ENCODE measurements at regions of chr7 and their contacts with region 1.

Region 1: DNA sequence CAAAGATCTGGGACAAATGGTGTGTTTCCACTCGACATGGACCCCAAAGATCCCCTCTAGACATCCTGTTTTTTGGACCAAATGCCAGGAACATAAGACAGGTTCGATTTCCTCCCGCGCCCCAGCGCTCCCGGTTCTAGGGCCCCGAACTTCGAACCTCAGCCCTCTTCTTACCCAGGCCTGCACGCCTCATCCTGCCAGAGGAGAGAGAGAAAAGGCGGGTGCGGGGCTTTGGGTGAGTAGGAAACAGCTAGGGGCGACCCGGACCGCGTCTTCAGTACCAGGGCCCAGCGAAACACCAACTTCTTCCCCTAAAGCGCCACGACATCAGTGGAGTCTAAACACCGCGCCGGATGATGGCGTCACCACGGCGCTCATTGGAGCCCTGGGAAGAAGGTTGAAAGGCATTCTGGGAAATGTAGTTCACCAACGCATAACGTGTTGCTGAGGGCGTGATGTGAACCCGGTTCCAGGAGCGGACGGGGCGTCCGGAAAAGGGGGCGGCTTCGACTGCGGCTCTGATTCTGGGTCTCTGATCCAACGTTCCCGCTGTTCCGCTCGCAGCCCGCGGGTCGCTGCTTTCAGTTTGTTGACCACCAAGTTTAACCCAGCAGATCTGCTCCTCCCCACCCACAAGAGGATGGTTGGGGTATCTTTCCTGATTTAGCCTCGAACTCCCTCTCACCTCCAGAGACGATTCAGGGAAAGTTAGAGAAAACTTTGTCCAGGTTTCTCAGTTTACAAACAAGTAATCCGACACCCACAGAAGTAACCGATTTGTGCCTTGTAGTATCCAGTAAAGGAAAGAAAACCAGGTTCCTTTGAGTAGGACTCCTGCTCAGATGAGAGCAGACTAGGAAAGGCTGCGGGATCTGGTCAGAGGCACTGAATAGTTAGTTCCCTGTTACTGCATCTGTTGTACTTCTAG is at the start of gene BET1:
- DNase-seq: peak; percentile 92 to 95
- ATAC-seq: peak; percentile 98 to 100 (median 100)
- H3K4me3 ChIP-seq: peak within 1 kb of the TSS; percentile 68 to 89 (median 76)
- H3K27ac ChIP-seq: peak within 1 kb of the TSS; percentile 18 to 96 (median 82)
- H3K4me1 ChIP-seq: peaks cover 0 to 31% (median 21%) of the 10 kb centered on the region in 9 donors
- H3K27me3 ChIP-seq: peaks cover 0 to 14% (median 0%) of the 10 kb centered on the region in 7 donors
- CTCF ChIP-seq: no peak
- total RNA-seq, gene BET1: 6.9 to 13.8 (median 11.0) TPM

Region 2: GRCh38 chr7:93902777-93903423 is 101.4 kb before region 1 on chr7:
- intact Hi-C with region 1: loop called in 3 of 10 experiments (anchors 5 to 10 kb)
- DNase-seq: peak in 1 of 2 donors; percentile 36
- ATAC-seq: peak in 7 of 8 donors; percentile 20 to 71 (median 66)
- H3K4me3 ChIP-seq: no peak overlapping the region
- H3K27ac ChIP-seq: no peak overlapping the region
- H3K4me1 ChIP-seq: peaks cover 0 to 8% (median 0%) of the 10 kb centered on the region in 9 donors
- H3K27me3 ChIP-seq: peaks cover 0 to 4% (median 0%) of the 10 kb centered on the region in 7 donors
- CTCF ChIP-seq: peak; percentile 65 to 91 (median 78)

Region 3: DNA sequence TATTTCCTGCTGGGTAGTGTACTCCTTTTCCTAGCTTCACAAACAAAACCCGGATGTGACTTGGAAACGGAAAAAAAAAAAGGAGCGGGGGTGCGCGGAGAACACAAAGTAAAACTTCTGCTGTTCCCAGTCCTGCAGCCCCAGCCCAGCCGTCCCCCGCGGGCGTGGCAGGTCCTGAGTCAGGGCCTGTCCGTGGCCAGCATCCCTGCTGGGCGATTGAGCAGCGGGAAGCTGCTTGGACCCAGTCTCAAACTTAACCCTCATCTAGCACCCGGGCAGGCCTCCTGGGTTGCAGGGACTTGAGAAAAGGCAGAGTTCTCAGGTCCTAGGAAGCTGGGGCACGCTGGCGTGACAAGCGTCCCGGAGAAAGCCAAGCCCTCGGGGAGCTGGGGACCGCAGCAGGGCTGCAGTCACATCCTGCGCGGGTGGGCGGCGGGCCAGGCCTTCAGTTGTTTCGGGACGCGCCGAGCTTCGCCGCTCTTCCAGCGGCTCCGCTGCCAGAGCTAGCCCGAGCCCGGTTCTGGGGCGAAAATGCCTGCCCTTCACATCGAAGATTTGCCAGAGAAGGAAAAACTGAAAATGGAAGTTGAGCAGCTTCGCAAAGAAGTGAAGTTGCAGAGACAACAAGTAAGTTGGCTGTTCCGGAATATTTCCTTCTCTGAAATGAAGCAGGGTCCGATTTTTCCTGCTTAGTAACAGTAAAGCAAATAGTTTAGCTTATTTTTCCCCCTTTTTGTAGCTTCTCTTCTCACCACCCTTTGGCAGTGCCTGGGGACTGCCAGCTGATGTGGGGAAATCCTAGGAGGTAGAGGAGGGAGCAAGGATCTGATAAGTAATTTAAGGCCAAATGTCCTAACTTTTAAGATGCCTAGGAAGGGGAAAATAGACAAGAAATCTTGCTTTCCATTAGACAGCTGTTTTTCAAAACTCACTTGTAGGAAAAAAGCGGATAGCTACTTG is 82.4 kb before region 1 on chr7 and contains the start of gene GNG11:
- intact Hi-C with region 1: loop called in 5 of 10 experiments (anchors 5 kb)
- DNase-seq: peak; percentile 87 to 90
- ATAC-seq: peak; percentile 91 to 98 (median 97)
- H3K4me3 ChIP-seq: peak within 1 kb of the TSS; percentile 34 to 80 (median 62)
- H3K27ac ChIP-seq: peak within 1 kb of the TSS; percentile 84 to 98 (median 90)
- H3K4me1 ChIP-seq: peaks cover 0 to 44% (median 16%) of the 10 kb centered on the region in 9 donors
- H3K27me3 ChIP-seq: peaks cover 0 to 30% (median 0%) of the 10 kb centered on the region in 7 donors
- CTCF ChIP-seq: peak in 2 of 9 donors; percentile 11 to 27
- total RNA-seq, gene GNG11: 10.6 to 24.7 (median 14.6) TPM

Region 4: DNA sequence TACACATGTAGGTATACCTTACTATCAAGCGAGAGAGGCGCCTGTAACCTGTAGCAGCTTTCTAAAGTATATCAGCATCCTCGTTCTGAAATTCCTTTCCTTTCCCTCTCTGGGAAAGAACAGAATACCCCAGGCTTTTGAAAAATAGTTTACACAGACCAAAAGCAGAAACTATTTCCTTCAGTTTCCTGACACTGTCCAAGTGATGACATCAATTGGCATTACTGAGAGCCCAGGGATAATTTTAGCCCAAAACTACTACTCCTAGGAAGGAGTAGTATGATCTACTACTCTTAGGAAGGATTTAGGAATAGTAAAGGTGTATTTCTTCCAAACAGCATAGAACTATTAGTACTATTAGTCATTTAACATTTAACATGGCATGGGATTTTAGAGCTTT is 76.7 kb before region 1 on chr7:
- intact Hi-C with region 1: loop called in 5 of 10 experiments (anchors 5 kb)
- DNase-seq: no peak
- ATAC-seq: peak in 6 of 8 donors; percentile 56 to 82 (median 75)
- H3K4me3 ChIP-seq: peak overlapping the region in 1 of 10 donors; percentile 9
- H3K27ac ChIP-seq: peak overlapping the region in 8 of 10 donors; percentile 38 to 96 (median 50)
- H3K4me1 ChIP-seq: peaks cover 0 to 51% (median 20%) of the 10 kb centered on the region in 9 donors
- H3K27me3 ChIP-seq: peaks cover 0 to 7% (median 0%) of the 10 kb centered on the region in 7 donors
- CTCF ChIP-seq: no peak

Region 5: GRCh38 chr7:94059746-94060145 is 55.5 kb after region 1 on chr7:
- intact Hi-C with region 1: no loop called
- DNase-seq: no peak
- ATAC-seq: no peak
- H3K4me3 ChIP-seq: no peak overlapping the region
- H3K27ac ChIP-seq: no peak overlapping the region
- H3K4me1 ChIP-seq: peaks cover 0 to 7% (median 0%) of the 10 kb centered on the region in 9 donors
- H3K27me3 ChIP-seq: peaks cover 0 to 26% (median 0%) of the 10 kb centered on the region in 7 donors
- CTCF ChIP-seq: no peak

Region 6: GRCh38 chr7:94170836-94171235 is 166.5 kb after region 1 on chr7:
- intact Hi-C with region 1: loop called in 1 of 10 experiments (anchors 10 kb)
- DNase-seq: no peak
- ATAC-seq: no peak
- H3K4me3 ChIP-seq: no peak overlapping the region
- H3K27ac ChIP-seq: peak overlapping the region in 2 of 10 donors; percentile 12 to 17
- H3K4me1 ChIP-seq: peaks cover 0 to 34% (median 5%) of the 10 kb centered on the region in 9 donors
- H3K27me3 ChIP-seq: no peaks in the 10 kb centered on the region
- CTCF ChIP-seq: no peak